PC-3 (cell line): ENCODE measurements at regions of chr1 and their contacts with region 1.

Region 1: DNA sequence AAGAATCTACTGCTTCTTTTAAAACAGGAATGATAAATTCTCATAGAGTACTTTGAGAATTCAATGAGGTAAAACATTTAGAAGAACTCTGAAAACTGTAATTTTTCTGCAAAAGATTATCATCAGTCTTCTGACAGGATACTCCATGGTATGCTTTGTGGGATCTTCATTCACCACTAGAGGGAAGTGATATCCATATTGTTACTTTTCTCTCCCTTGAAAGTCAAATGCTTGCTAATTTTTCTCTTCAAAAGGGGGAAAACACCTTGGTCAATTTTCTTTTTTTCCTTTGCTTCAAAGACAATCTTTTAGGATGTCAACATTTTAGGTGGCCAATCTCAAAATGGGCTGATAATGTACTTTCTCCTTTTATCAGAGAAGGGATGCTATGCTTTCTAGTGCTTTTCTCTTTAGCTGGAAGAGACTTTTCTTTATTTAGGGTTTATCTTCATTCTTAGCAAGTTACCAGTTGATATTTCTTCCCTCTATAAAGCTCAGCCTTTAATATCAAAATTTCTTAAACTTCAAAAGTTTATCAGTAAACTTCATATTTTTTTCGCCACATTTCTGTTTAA is 95.5 kb downstream of the NEGR1 start:
- DNase-seq: peak; percentile 59
- ATAC-seq: peak; percentile 81
- H3K4me3 ChIP-seq: no peak overlapping the region
- H3K27ac ChIP-seq: no peak overlapping the region
- H3K4me1 ChIP-seq: no peaks in the 10 kb centered on the region
- H3K27me3 ChIP-seq: no peaks in the 10 kb centered on the region
- CTCF ChIP-seq: peak; percentile 88

Region 2: GRCh38 chr1:71587961-71588360 is 598.9 kb before region 1 on chr1:
- CTCF ChIA-PET with region 1: no interaction called
- POLR2A ChIA-PET with region 1: no interaction called
- intact Hi-C with region 1: loop called (anchors 5 kb)
- DNase-seq: peak; percentile 47
- ATAC-seq: no peak; the same call in 1 of the 2 replicates
- H3K4me3 ChIP-seq: no peak overlapping the region
- H3K27ac ChIP-seq: no peak overlapping the region
- H3K4me1 ChIP-seq: peaks cover 14% of the 10 kb centered on the region
- H3K27me3 ChIP-seq: no peaks in the 10 kb centered on the region
- CTCF ChIP-seq: peak; percentile 60

Region 3: DNA sequence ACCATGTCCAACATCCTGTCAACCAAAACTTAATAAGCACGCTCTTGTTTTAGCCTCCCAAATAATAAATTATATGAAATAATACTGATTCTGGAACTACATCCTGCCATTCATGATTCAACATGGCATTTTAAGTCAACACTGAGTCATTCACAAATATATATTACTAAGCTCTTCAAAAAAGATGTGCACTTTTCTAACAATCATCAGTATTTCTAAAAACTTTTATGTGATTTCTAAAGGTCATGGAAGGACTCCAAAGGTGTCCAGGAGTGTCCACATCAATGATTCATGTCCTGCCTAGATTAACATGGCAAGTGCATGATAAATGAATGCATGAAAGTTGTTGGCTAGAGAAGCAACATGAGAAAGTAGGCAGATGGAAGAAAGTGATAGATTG is 43.9 kb after region 1 on chr1:
- CTCF ChIA-PET with region 1: no interaction called
- POLR2A ChIA-PET with region 1: no interaction called
- intact Hi-C with region 1: loop called (anchors 2 kb)
- DNase-seq: peak; percentile 96
- ATAC-seq: peak; percentile 73
- H3K4me3 ChIP-seq: peak overlapping the region; percentile 31; the same call in 1 of the 2 replicates
- H3K27ac ChIP-seq: peak overlapping the region; percentile 92
- H3K4me1 ChIP-seq: peaks cover 37% of the 10 kb centered on the region
- H3K27me3 ChIP-seq: no peaks in the 10 kb centered on the region
- CTCF ChIP-seq: no peak

Region 4: DNA sequence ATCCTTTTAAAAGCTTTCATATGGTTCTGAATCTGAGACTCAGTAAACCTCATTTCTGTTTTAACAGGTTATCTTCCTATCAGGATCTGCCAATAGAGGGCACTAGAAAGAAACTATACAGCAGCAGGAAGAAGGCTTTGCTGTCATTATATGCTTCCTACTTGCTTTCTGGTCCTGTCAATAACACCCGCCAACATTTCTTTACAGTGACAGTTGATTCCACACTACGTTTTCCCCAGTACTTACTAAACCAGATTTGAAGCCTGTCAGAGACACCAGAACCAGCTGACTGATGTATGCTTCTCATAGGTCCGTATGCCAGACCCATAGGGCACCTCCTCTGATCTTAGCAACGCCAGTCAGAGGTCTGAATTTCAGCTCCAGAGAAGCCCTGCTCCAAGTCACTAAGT is 436.5 kb after region 1 on chr1:
- CTCF ChIA-PET with region 1: no interaction called
- POLR2A ChIA-PET with region 1: no interaction called
- intact Hi-C with region 1: loop called (anchors 10 kb)
- DNase-seq: peak; percentile 78
- ATAC-seq: peak; percentile 79
- H3K4me3 ChIP-seq: peak overlapping the region; percentile 51; the same call in 1 of the 2 replicates
- H3K27ac ChIP-seq: no peak overlapping the region
- H3K4me1 ChIP-seq: peaks cover 13% of the 10 kb centered on the region; the same call in 1 of the 2 replicates
- H3K27me3 ChIP-seq: no peaks in the 10 kb centered on the region
- CTCF ChIP-seq: peak; percentile 84

Region 5: DNA sequence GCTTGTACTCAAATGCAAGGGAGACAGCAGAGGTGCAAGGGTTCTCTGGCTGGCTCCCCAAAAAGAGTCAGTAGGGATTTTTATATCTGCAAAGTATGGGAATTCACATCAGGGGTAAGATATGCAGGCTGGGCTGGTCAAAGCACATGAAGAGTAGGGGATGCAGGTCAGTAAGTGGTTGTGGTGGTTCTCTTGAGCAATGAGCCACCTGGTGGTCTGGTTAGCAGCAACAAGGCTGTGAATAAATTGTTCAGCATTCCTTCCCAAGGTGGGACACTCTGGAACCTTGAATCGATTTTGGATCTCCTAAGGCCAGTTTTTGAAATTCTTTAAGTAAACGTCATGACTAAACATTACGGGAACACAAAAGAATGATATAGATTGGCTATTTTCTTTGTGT is 658.5 kb after region 1 on chr1:
- CTCF ChIA-PET with region 1: no interaction called
- POLR2A ChIA-PET with region 1: no interaction called
- intact Hi-C with region 1: loop called (anchors 10 kb)
- DNase-seq: peak; percentile 60
- ATAC-seq: peak; percentile 85
- H3K4me3 ChIP-seq: no peak overlapping the region
- H3K27ac ChIP-seq: no peak overlapping the region
- H3K4me1 ChIP-seq: no peaks in the 10 kb centered on the region
- H3K27me3 ChIP-seq: no peaks in the 10 kb centered on the region
- CTCF ChIP-seq: peak; percentile 68

Region 6: DNA sequence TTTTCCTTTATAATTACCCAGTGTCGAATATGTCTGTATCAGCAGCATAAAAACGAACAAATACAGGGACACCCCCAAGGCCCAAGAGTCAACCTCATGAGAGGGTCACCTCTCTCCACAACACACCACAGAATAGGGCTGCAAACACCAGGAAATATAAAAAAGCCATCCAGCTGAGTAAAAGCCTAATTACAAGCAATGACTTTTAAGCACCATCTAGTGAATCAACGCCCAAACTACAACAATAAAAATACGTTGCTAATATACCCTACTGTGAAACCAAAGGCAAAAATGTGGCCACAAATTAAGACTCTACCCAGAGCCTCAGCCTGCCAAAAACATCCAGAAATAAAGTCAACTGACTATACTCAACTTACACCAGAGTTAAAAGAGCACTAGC is 913.4 kb after region 1 on chr1:
- CTCF ChIA-PET with region 1: no interaction called
- POLR2A ChIA-PET with region 1: no interaction called
- intact Hi-C with region 1: loop called (anchors 5 kb)
- DNase-seq: peak; percentile 42
- ATAC-seq: peak; percentile 80
- H3K4me3 ChIP-seq: no peak overlapping the region
- H3K27ac ChIP-seq: no peak overlapping the region
- H3K4me1 ChIP-seq: no peaks in the 10 kb centered on the region
- H3K27me3 ChIP-seq: no peaks in the 10 kb centered on the region; the same call in 1 of the 2 replicates
- CTCF ChIP-seq: peak; percentile 55; the same call in 1 of the 2 replicates